ENCODE measurements at regions of chr21 and their contacts with region 1.

Region 1: GRCh38 chr21:34946916-34947534 is 102.1 kb downstream of the RUNX1 start:
- DNase-seq: no peak
- ATAC-seq: peak; percentile 65
- H3K4me3 Mint-ChIP-seq: peak overlapping the region; percentile 13
- H3K27ac Mint-ChIP-seq: peak overlapping the region; percentile 95
- H3K4me1 Mint-ChIP-seq: peaks cover 92% of the 10 kb centered on the region
- H3K27me3 Mint-ChIP-seq: no peaks in the 10 kb centered on the region

Region 2: DNA sequence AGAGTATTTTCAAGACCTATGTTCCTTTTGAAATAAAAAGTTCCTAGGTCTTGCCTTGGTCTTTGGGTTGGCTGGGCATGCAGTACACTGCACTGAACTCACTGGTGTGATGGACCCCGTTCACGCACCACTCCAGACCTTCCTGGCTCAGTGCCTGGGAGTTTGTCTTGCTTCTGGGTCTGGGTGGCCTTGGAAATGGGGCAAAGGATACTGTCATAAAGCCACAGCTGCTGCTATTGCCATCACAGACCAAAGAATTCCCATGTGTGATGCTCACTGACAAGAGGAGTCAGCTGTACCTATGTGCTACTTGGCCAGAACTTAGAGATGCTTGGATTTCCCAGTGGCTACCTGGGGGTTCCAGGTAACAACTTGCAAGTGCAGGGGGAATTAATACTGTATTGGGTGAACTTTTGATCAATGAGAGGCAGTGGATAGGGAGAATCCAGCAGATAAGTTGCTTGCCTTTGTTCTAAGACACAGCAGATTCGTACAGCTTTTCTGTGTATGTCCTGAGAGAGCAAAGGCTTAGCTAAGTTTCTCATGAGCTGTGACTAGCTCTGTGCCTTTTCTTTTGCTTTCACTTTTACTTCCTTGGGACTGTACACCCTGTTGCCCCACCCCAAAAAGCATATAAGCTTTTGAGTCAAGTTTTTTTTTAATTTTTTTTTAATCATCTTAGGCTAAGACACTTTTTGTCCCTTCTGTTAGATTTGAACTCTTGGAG is 13.3 kb before region 1 on chr21:
- CTCF ChIA-PET with region 1: interaction called, 33 read pairs
- POLR2A ChIA-PET with region 1: interaction called, 11 read pairs
- intact Hi-C with region 1: loop called in 1 of 2 experiments (anchors 1 kb)
- DNase-seq: peak; percentile 40
- ATAC-seq: peak; percentile 85
- H3K4me3 Mint-ChIP-seq: peak overlapping the region; percentile 68
- H3K27ac Mint-ChIP-seq: peak overlapping the region; percentile 96
- H3K4me1 Mint-ChIP-seq: peaks cover 84% of the 10 kb centered on the region
- H3K27me3 Mint-ChIP-seq: no peaks in the 10 kb centered on the region

Region 3: GRCh38 chr21:34996304-34997101 is 49.5 kb after region 1 on chr21:
- CTCF ChIA-PET with region 1: no interaction called
- POLR2A ChIA-PET with region 1: no interaction called
- intact Hi-C with region 1: no loop called
- DNase-seq: peak; percentile 55
- ATAC-seq: peak; percentile 49
- H3K4me3 Mint-ChIP-seq: peak overlapping the region; percentile 13
- H3K27ac Mint-ChIP-seq: peak overlapping the region; percentile 74
- H3K4me1 Mint-ChIP-seq: peaks cover 75% of the 10 kb centered on the region
- H3K27me3 Mint-ChIP-seq: no peaks in the 10 kb centered on the region

Region 4: DNA sequence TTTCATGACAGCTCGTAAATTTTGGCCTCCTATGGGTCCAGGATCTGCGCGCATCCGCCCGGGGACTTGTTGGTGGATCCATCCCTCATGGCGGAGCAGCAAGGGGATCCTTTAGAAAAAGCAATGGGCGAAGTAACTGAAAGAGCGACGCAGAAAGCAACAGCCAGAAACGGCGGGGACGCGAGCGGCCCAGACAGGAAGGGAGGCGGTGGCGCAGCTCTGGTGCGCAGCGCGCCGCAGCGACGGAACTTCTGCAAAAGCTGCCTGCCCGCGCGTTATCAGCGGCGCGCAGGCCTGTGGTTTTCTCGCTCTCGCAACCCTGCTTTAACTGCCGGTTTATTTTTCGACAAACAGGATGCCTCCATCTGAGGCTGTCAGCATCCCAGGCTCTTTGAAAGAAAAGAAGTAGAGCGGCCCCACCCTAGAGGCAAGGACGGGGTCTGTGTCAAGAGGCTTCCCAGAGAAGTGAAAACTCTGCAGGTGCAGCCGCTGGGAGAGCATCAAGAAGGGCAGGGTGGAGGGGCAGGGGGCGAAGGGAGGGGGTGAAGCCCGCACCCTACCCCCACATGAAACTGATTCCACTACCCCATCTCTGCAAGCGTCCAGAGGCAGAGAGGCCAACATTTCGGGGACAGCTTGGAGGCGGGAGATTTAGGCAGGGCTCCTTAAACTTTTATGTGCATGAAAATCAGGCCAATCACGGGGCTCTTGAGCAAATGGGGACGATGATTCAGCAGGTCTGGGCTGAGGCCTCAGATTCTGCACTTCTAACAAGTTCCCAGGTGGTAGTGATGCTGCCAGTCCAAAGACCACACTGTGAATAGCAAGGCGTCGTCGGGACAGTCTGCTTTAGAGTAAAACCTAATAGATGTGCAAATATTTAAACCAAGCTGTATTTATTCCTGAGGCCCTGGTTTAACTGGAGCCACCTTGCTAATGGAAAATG is 79.9 kb after region 1 on chr21:
- CTCF ChIA-PET with region 1: no interaction called
- POLR2A ChIA-PET with region 1: interaction called, 3 read pairs
- intact Hi-C with region 1: loop called in 1 of 2 experiments (anchors 5 kb)
- DNase-seq: peak; percentile 92
- ATAC-seq: peak; percentile 68
- H3K4me3 Mint-ChIP-seq: peak overlapping the region; percentile 75
- H3K27ac Mint-ChIP-seq: peak overlapping the region; percentile 97
- H3K4me1 Mint-ChIP-seq: peaks cover 88% of the 10 kb centered on the region
- H3K27me3 Mint-ChIP-seq: no peaks in the 10 kb centered on the region

Region 5: DNA sequence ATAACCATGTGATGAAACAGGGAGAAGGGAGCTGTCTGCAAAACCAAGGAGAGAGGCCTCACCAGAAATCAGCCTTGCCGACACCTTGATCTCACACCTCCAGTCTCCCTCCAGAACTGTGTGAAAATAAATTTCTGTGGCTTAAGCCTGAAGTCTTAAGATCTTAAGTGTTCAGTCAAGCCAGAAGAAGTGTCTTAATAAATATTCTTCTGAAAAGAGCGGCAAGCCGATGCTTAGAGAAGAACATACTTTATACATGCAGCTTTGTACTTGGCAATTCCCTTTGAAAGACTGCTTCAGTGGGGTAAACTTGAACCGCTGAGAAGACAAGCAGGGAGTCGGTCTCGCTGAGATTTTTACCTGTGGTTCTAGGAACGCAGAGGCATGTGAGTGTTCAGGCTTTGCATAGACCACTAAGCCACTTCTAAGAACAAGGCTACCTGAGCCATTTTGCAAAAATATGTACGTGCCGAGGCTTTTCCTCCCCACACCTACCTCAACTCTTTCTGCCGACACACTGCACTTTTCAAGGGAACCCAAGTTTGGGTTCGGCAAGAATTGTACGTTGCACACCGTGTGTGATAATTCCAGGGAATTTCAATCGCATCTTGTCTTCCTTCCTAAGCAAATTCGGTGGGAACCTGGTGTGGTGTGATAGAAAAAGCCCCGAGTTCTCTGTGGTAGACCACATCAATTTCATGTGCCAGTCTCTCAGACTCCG is 98.7 kb after region 1 on chr21:
- CTCF ChIA-PET with region 1: interaction called, 6 read pairs
- POLR2A ChIA-PET with region 1: interaction called, 24 read pairs
- intact Hi-C with region 1: loop called in 1 of 2 experiments (anchors 1 kb)
- DNase-seq: peak; percentile 64
- ATAC-seq: no peak
- H3K4me3 Mint-ChIP-seq: peak overlapping the region; percentile 87
- H3K27ac Mint-ChIP-seq: peak overlapping the region; percentile 95
- H3K4me1 Mint-ChIP-seq: peaks cover 79% of the 10 kb centered on the region
- H3K27me3 Mint-ChIP-seq: no peaks in the 10 kb centered on the region

Region 6: DNA sequence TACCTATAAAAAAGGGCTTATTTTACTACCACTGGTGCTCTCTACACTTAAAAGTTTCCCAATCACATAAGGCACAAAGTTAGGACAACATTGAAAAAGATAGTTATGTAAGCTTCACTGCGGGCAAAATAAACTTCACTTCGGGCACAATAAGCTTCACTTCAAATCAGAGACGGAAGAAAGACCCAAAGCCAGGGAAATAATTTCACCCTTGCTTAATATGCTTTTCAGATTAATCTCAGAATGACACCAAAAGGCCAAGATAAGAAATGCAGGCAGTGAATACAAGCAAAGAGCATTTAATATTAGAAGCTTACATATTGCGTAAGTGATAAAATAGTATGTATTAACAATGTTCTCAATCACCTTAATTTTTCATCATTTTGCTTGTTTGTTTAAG is 669.1 kb after region 1 on chr21:
- CTCF ChIA-PET with region 1: no interaction called
- POLR2A ChIA-PET with region 1: no interaction called
- intact Hi-C with region 1: no loop called
- DNase-seq: no peak
- ATAC-seq: no peak
- H3K4me3 Mint-ChIP-seq: no peak overlapping the region
- H3K27ac Mint-ChIP-seq: no peak overlapping the region
- H3K4me1 Mint-ChIP-seq: peaks cover 6% of the 10 kb centered on the region
- H3K27me3 Mint-ChIP-seq: peaks cover 3% of the 10 kb centered on the region

Measured in activated CD4-positive, alpha-beta T cell treated with anti-CD3 and anti-CD28 coated beads for 36 hours (primary cell).